Caco-2 (cell line): ENCODE measurements at regions of chr1 and their contacts with region 1.

Region 1: DNA sequence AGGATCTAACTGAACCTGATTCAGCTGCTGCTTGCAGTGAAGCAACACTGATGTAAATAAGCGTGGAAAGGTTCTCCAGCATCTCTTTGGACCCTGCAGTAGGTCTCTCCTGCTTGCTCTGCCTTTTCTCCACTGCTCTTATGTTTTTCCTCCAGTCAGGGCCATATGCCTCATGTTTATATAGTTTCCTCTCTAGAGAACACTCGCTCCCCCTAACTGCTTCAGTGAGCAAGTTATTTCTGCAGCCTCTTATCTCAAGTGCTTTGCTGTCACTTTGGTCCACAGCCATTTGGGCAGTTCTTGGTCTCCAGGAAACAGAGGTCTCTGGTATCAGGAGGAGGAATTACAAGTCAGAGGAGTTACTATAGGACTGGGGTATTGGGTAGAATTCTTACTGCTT is 5.3 kb downstream of the PRUNE1 start:
- DNase-seq: peak; percentile 48 to 56
- H3K4me3 ChIP-seq: no peak overlapping the region
- H3K4me3 Mint-ChIP-seq: peak overlapping the region; percentile 54
- H3K27ac Mint-ChIP-seq: peak overlapping the region; percentile 84
- H3K4me1 ChIP-seq: peaks cover 42% of the 10 kb centered on the region
- H3K4me1 Mint-ChIP-seq: peaks cover 17% of the 10 kb centered on the region
- H3K27me3 ChIP-seq: no peaks in the 10 kb centered on the region
- H3K27me3 Mint-ChIP-seq: no peaks in the 10 kb centered on the region
- CTCF ChIP-seq: peak in 1 of 2 experiments; percentile 8

Region 2: DNA sequence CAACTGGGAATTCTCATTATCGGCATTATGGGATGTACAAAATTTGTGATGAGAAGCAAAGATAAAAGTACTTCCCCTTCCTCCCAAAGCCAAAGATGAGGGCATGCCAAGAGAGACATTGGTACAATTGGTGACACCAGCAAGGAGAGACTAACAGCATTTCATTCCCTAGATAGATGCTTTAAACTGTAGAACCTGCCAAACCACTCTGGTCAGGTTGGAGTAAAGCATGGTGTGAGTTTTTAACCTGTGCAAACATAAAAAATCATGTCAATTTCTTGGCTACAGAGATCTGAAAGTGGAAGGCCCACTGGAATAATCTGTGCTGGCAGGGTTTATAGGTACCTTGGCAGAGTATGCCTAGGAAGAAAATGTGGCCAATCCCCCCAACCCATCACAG is 107.2 kb before region 1 on chr1:
- CTCF ChIA-PET with region 1: no interaction called
- POLR2A ChIA-PET with region 1: no interaction called
- intact Hi-C with region 1: no loop called
- DNase-seq: peak in 1 of 2 experiments; percentile 24
- H3K4me3 ChIP-seq: no peak overlapping the region
- H3K4me3 Mint-ChIP-seq: no peak overlapping the region
- H3K27ac Mint-ChIP-seq: no peak overlapping the region
- H3K4me1 ChIP-seq: no peaks in the 10 kb centered on the region
- H3K4me1 Mint-ChIP-seq: peaks cover 8% of the 10 kb centered on the region
- H3K27me3 ChIP-seq: no peaks in the 10 kb centered on the region
- H3K27me3 Mint-ChIP-seq: no peaks in the 10 kb centered on the region
- CTCF ChIP-seq: no peak

Region 3: GRCh38 chr1:151059078-151059907 is 45.8 kb after region 1 on chr1 and contains the start of gene CDC42SE1:
- CTCF ChIA-PET with region 1: no interaction called
- POLR2A ChIA-PET with region 1: interaction called, 3 read pairs
- intact Hi-C with region 1: loop called (anchors 1 kb)
- DNase-seq: peak; percentile 83 to 87
- H3K4me3 ChIP-seq: peak within 1 kb of the TSS; percentile 60
- H3K4me3 Mint-ChIP-seq: peak within 1 kb of the TSS; percentile 88
- H3K27ac Mint-ChIP-seq: peak within 1 kb of the TSS; percentile 86
- H3K4me1 ChIP-seq: peaks cover 17% of the 10 kb centered on the region
- H3K4me1 Mint-ChIP-seq: peaks cover 52% of the 10 kb centered on the region
- H3K27me3 ChIP-seq: no peaks in the 10 kb centered on the region
- H3K27me3 Mint-ChIP-seq: no peaks in the 10 kb centered on the region
- CTCF ChIP-seq: peak; percentile 82 to 90
- total RNA-seq, gene CDC42SE1: 58.7 and 59.4 TPM in 2 replicates

Region 4: GRCh38 chr1:151198255-151199127 is 185.0 kb after region 1 on chr1 and contains the start of gene PIP5K1A:
- CTCF ChIA-PET with region 1: no interaction called
- POLR2A ChIA-PET with region 1: no interaction called
- intact Hi-C with region 1: no loop called
- DNase-seq: peak; percentile 97 to 98
- H3K4me3 ChIP-seq: peak within 1 kb of the TSS; percentile 60
- H3K4me3 Mint-ChIP-seq: peak within 1 kb of the TSS; percentile 89
- H3K27ac Mint-ChIP-seq: peak within 1 kb of the TSS; percentile 92
- H3K4me1 ChIP-seq: peaks cover 4% of the 10 kb centered on the region; the same call in 1 of the 2 replicates
- H3K4me1 Mint-ChIP-seq: peaks cover 13% of the 10 kb centered on the region
- H3K27me3 ChIP-seq: no peaks in the 10 kb centered on the region
- H3K27me3 Mint-ChIP-seq: no peaks in the 10 kb centered on the region
- CTCF ChIP-seq: no peak
- total RNA-seq, gene PIP5K1A: 88.6 and 95.1 TPM in 2 replicates